ENCODE measurements at regions of chr2 and their contacts with region 1.

Region 1: GRCh38 chr2:212777020-212777491 is 238.5 kb upstream of the ERBB4 start:
- DNase-seq: peak; percentile 52
- H3K4me3 ChIP-seq: no peak overlapping the region
- H3K27ac ChIP-seq: no peak overlapping the region
- H3K4me1 ChIP-seq: peaks cover 7% of the 10 kb centered on the region
- H3K27me3 ChIP-seq: no peaks in the 10 kb centered on the region
- CTCF ChIP-seq: peak; percentile 60 to 69

Region 2: GRCh38 chr2:212711856-212712255 is 65.2 kb before region 1 on chr2:
- CTCF ChIA-PET with region 1: interaction called, 5 read pairs
- dilution Hi-C with region 1: loop called (anchors 5 kb)
- in situ Hi-C with region 1: no loop called
- intact Hi-C with region 1: no loop called
- DNase-seq: peak; percentile 79
- H3K4me3 ChIP-seq: no peak overlapping the region
- H3K27ac ChIP-seq: peak overlapping the region; percentile 78
- H3K4me1 ChIP-seq: peaks cover 26% of the 10 kb centered on the region
- H3K27me3 ChIP-seq: no peaks in the 10 kb centered on the region
- CTCF ChIP-seq: no peak

Region 3: GRCh38 chr2:212892193-212892592 is 115.1 kb after region 1 on chr2:
- CTCF ChIA-PET with region 1: interaction called, 6 read pairs
- dilution Hi-C with region 1: no loop called
- in situ Hi-C with region 1: no loop called
- intact Hi-C with region 1: loop called (anchors 1 kb)
- DNase-seq: peak; percentile 59
- H3K4me3 ChIP-seq: no peak overlapping the region
- H3K27ac ChIP-seq: no peak overlapping the region
- H3K4me1 ChIP-seq: peaks cover 5% of the 10 kb centered on the region
- H3K27me3 ChIP-seq: no peaks in the 10 kb centered on the region
- CTCF ChIP-seq: peak; percentile 56 to 69

Region 4: GRCh38 chr2:213156717-213157116 is 379.7 kb after region 1 on chr2:
- CTCF ChIA-PET with region 1: interaction called, 13 read pairs
- dilution Hi-C with region 1: no loop called
- in situ Hi-C with region 1: loop called (anchors 5 to 10 kb)
- intact Hi-C with region 1: loop called (anchors 1 kb)
- DNase-seq: no peak
- H3K4me3 ChIP-seq: no peak overlapping the region
- H3K27ac ChIP-seq: no peak overlapping the region
- H3K4me1 ChIP-seq: peaks cover 6% of the 10 kb centered on the region
- H3K27me3 ChIP-seq: no peaks in the 10 kb centered on the region
- CTCF ChIP-seq: no peak

Measured in mammary epithelial cell (primary cell).